ENCODE measurements at regions of chr3 and their contacts with region 1.

Region 1: DNA sequence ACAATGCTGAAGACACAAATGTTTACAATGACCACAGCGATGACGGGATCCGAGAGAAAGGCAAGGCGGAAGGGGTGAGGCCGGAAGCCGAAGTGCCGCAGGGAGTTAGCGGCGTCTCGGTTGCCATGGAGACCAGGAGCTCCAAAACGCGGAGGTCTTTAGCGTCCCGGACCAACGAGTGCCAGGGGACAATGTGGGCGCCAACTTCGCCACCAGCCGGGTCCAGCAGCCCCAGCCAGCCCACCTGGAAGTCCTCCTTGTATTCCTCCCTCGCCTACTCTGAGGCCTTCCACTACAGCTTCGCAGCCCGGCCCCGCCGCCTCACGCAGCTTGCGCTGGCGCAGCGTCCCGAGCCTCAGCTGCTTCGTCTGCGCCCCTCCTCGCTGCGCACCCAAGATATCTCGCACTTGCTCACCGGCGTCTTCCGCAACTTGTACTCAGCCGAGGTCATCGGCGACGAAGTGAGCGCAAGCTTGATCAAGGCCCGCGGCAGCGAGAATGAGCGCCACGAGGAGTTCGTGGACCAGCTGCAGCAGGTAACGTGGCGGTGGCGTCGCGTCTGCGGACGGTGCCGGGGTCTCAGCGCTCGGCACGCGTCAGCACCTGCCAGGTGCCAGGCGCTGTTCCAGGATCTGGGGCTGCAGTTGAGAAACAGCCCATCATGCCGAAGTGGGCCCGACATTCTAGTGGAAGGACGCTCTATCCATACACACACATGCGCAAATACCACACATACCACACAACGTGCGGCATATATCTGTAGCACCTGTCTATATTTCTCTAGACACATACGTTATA is at the start of gene DLEC1:
- DNase-seq: peak; percentile 78 to 94 (median 84)
- H3K4me3 ChIP-seq: peak within 1 kb of the TSS; percentile 75
- H3K4me3 Mint-ChIP-seq: peak within 1 kb of the TSS; percentile 68 to 90 (median 83)
- H3K27ac ChIP-seq: peak within 1 kb of the TSS; percentile 83
- H3K27ac Mint-ChIP-seq: peak within 1 kb of the TSS; percentile 94 to 100 (median 98)
- H3K4me1 ChIP-seq: peaks cover 27% of the 10 kb centered on the region
- H3K4me1 Mint-ChIP-seq: peaks cover 29 to 45% (median 38%) of the 10 kb centered on the region in 3 donors
- H3K27me3 ChIP-seq: no peaks in the 10 kb centered on the region
- H3K27me3 Mint-ChIP-seq: peaks cover 0 to 2% of the 10 kb centered on the region in 2 donors
- total RNA-seq, gene DLEC1: 1.0 to 1.3 TPM

Region 2: GRCh38 chr3:37974121-37975083 is 64.9 kb before region 1 on chr3:
- CTCF ChIA-PET with region 1: interaction called, 19 read pairs
- POLR2A ChIA-PET with region 1: no interaction called
- DNase-seq: peak; percentile 56 to 80 (median 60)
- H3K4me3 ChIP-seq: no peak overlapping the region
- H3K4me3 Mint-ChIP-seq: no peak overlapping the region
- H3K27ac ChIP-seq: no peak overlapping the region
- H3K27ac Mint-ChIP-seq: peak overlapping the region in 2 of 8 donors; percentile 22 to 52
- H3K4me1 ChIP-seq: no peaks in the 10 kb centered on the region
- H3K4me1 Mint-ChIP-seq: peaks cover 4 to 5% (median 4%) of the 10 kb centered on the region in 3 donors
- H3K27me3 ChIP-seq: no peaks in the 10 kb centered on the region
- H3K27me3 Mint-ChIP-seq: peaks cover 0 to 1% of the 10 kb centered on the region in 2 donors

Region 3: DNA sequence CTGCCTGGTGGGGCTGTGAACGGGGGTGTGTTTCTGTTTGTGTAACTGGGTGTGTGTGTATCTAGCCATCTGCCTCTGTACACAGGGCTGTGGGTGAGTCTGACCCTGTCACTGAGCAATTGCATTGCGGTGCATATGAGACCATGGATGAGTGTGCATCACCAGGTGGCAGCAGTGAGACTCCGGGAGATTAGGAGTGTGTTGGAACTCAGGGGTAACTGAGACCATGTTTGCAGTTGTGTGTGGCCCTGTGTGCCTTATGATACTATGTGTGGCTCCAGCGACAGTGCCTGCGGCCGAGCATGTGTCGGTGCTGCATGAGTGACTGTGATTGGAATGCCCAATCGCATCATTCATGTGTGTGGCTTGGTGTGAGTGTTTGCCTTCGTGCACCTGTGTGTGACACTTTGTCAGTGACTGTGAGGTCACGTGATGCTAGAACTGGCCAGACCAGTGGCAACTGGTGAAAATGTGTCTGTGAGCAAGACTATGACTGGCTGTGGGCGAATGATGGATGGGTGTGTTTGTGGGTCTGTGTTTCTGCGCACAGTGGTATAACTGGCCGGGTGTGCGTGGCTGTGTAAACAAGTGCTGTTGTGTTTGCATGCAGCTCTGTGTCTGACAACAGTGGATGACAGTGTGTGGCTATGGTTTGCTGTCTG is 34.8 kb before region 1 on chr3:
- CTCF ChIA-PET with region 1: interaction called, 49 read pairs
- POLR2A ChIA-PET with region 1: interaction called, 3 read pairs
- DNase-seq: peak in 4 of 5 donors; percentile 30 to 74 (median 33)
- H3K4me3 ChIP-seq: no peak overlapping the region
- H3K4me3 Mint-ChIP-seq: peak overlapping the region in 1 of 7 donors; percentile 14
- H3K27ac ChIP-seq: no peak overlapping the region
- H3K27ac Mint-ChIP-seq: peak overlapping the region; percentile 36 to 95 (median 79)
- H3K4me1 ChIP-seq: no peaks in the 10 kb centered on the region
- H3K4me1 Mint-ChIP-seq: peaks cover 18 to 27% (median 25%) of the 10 kb centered on the region in 3 donors
- H3K27me3 ChIP-seq: no peaks in the 10 kb centered on the region
- H3K27me3 Mint-ChIP-seq: peaks cover 0 to 1% of the 10 kb centered on the region in 2 donors

Region 4: GRCh38 chr3:38108649-38109579 is 69.6 kb after region 1 on chr3:
- CTCF ChIA-PET with region 1: no interaction called
- POLR2A ChIA-PET with region 1: no interaction called
- DNase-seq: no peak
- H3K4me3 ChIP-seq: no peak overlapping the region
- H3K4me3 Mint-ChIP-seq: no peak overlapping the region
- H3K27ac ChIP-seq: no peak overlapping the region
- H3K27ac Mint-ChIP-seq: no peak overlapping the region
- H3K4me1 ChIP-seq: no peaks in the 10 kb centered on the region
- H3K4me1 Mint-ChIP-seq: no peaks in the 10 kb centered on the region
- H3K27me3 ChIP-seq: no peaks in the 10 kb centered on the region
- H3K27me3 Mint-ChIP-seq: peaks cover 0 to 4% of the 10 kb centered on the region in 2 donors

Region 5: GRCh38 chr3:38164966-38165680 is 125.8 kb after region 1 on chr3 and contains the start of gene OXSR1:
- CTCF ChIA-PET with region 1: no interaction called
- POLR2A ChIA-PET with region 1: interaction called, 21 read pairs
- DNase-seq: peak; percentile 93 to 99 (median 98)
- H3K4me3 ChIP-seq: peak within 1 kb of the TSS; percentile 94
- H3K4me3 Mint-ChIP-seq: peak within 1 kb of the TSS; percentile 90 to 98 (median 96)
- H3K27ac ChIP-seq: peak within 1 kb of the TSS; percentile 100
- H3K27ac Mint-ChIP-seq: peak within 1 kb of the TSS; percentile 95 to 100 (median 100)
- H3K4me1 ChIP-seq: peaks cover 39% of the 10 kb centered on the region
- H3K4me1 Mint-ChIP-seq: peaks cover 42 to 55% (median 46%) of the 10 kb centered on the region in 3 donors
- H3K27me3 ChIP-seq: no peaks in the 10 kb centered on the region
- H3K27me3 Mint-ChIP-seq: no peaks in the 10 kb centered on the region
- total RNA-seq, gene OXSR1: 56.3 to 60.0 TPM